ENCODE measurements at regions of chr10 and their contacts with region 1.

Region 1: GRCh38 chr10:88901206-88901983 is 21.4 kb downstream of the STAMBPL1 start:
- DNase-seq: peak; percentile 44
- CTCF ChIP-seq: no peak

Region 2: DNA sequence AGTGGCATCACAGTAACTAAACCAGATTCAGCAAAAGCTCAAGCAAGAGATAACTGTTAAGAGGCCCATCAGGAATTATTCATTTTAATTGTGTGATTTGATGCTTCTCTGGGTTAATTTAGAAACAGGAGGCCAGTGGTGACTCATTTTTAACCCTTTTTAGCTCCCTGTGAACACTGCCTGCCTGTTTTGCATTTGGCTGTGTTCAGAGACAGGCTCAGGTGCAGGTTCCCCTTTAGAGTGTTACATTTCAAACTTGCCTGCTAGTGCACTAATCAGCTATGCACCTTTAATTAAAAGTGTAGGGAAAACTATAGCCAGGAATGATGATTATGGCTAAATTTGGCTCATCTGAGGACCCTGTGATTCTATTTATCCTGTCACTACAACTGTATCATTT is 14.8 kb before region 1 on chr10:
- CTCF ChIA-PET with region 1: interaction called, 59 read pairs
- POLR2A ChIA-PET with region 1: no interaction called
- DNase-seq: peak; percentile 38
- CTCF ChIP-seq: no peak